H1 (cell line): ENCODE measurements at regions of chrX and their contacts with region 1.

Region 1: GRCh38 chrX:68807818-68808217 is 21.0 kb upstream of the EFNB1 start:
- DNase-seq: no peak
- H3K4me3 ChIP-seq: no peak overlapping the region
- H3K27ac ChIP-seq: no peak overlapping the region
- H3K4me1 ChIP-seq: no peaks in the 10 kb centered on the region
- H3K27me3 ChIP-seq: no peaks in the 10 kb centered on the region
- CTCF ChIP-seq: peak in 2 of 3 experiments; percentile 37 to 52; a peak in 3 of 4 replicates
- EP300 ChIP-seq: no peak
- POLR2A ChIP-seq: no peak
- RAD21 ChIP-seq: peak; percentile 50 to 69

Region 2: DNA sequence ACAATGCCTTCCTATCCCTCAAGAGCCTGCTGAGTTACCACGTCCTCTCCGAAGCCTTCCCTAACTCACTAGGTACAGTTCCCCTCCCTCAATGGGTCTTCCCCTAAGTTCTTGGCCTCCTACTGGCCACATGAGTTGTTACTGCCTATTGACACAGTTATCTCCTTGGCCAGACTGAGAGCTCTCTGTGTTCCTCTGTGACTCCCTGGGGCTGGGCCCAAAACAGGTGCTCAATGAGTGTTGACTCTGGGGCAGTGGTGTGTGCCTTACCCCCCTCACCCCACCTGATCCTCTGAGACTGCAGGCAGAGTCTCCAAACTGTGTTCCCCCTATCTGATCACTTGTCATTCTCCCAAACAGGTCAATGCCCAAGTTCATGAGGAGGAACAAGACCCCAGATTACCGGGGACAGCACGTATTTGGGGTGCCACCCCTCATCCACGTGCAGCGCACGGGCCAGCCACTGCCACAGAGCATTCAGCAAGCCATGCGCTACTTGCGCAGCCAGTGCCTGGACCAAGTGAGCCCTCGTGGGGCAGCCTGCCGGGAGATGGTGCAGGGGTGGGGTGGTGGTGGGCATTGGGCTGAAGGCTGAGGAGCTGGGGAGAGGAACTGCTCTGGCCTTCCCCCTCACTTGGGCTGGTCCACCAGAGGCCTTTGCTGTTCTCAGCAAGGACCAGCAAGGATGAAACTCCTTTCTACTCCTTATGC is 87.8 kb before region 1 on chrX:
- CTCF ChIA-PET with region 1: interaction called, 14 read pairs
- POLR2A ChIA-PET with region 1: no interaction called
- DNase-seq: no peak
- H3K4me3 ChIP-seq: no peak overlapping the region
- H3K27ac ChIP-seq: no peak overlapping the region
- H3K4me1 ChIP-seq: no peaks in the 10 kb centered on the region
- H3K27me3 ChIP-seq: no peaks in the 10 kb centered on the region
- CTCF ChIP-seq: peak in 2 of 3 experiments; percentile 17 to 42; a peak in 2 of 4 replicates
- EP300 ChIP-seq: no peak
- POLR2A ChIP-seq: no peak
- RAD21 ChIP-seq: peak in 1 of 2 experiments; percentile 21; a peak in 1 of 4 replicates

Region 3: DNA sequence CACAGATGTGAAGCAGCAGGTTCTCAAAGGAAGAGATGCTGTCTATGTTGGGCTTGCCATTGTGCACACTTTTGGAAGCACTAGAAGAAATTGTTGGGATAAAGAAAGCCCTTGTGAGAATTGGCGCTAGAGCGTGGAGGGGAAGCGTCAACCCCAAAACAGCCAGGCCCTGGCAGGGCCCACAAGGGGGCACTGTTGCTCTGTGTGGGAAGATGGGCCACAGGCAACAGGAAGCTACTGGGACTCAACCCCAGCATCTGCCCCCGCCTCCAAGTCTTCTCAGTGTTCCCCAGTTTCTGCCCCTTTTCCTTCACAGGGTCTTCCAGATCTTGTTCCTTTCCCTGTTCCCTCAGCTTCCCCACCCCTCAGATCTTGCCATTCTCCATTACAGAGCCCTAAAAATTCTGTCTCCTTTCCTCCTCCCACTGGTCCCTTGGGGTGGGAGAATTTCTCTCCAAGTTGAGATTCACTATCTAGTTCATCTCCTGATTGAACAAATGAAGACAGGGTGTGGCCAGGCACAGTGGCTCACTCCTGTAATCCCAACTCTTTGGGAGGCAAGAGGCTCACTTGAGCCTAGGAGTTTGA is 74.8 kb before region 1 on chrX:
- CTCF ChIA-PET with region 1: interaction called, 94 read pairs
- POLR2A ChIA-PET with region 1: interaction called, 4 read pairs
- DNase-seq: peak; percentile 10 to 84
- H3K4me3 ChIP-seq: no peak overlapping the region
- H3K27ac ChIP-seq: no peak overlapping the region
- H3K4me1 ChIP-seq: no peaks in the 10 kb centered on the region
- H3K27me3 ChIP-seq: no peaks in the 10 kb centered on the region
- CTCF ChIP-seq: peak; percentile 76 to 81 (median 79)
- EP300 ChIP-seq: no peak
- POLR2A ChIP-seq: no peak
- RAD21 ChIP-seq: peak; percentile 87 to 88

Region 4: GRCh38 chrX:68784816-68785215 is 23.0 kb before region 1 on chrX:
- CTCF ChIA-PET with region 1: interaction called, 12 read pairs
- POLR2A ChIA-PET with region 1: no interaction called
- DNase-seq: no peak
- H3K4me3 ChIP-seq: no peak overlapping the region
- H3K27ac ChIP-seq: no peak overlapping the region
- H3K4me1 ChIP-seq: no peaks in the 10 kb centered on the region
- H3K27me3 ChIP-seq: no peaks in the 10 kb centered on the region
- CTCF ChIP-seq: no peak
- EP300 ChIP-seq: no peak
- POLR2A ChIP-seq: no peak
- RAD21 ChIP-seq: no peak

Region 5: DNA sequence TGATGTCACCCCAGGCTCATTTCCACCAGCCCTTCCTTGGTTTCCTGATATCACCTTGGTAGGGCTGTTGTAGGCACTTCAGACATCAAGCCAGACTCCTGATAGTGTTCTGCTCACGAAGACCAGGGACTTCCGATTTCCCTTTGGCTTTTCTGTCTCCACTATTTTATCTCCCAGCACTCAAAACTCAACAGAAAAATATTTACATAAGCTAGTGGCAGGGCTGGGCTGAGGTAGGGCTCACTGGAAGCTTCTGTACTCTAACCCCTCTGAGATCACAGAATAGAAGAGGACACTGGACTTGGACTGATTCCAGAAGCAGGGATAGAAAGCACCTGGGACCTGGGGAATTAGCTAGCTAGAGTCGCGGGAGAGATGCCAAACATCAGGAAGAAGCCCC is 13.4 kb before region 1 on chrX:
- CTCF ChIA-PET with region 1: interaction called, 21 read pairs
- POLR2A ChIA-PET with region 1: no interaction called
- DNase-seq: no peak
- H3K4me3 ChIP-seq: no peak overlapping the region
- H3K27ac ChIP-seq: no peak overlapping the region
- H3K4me1 ChIP-seq: no peaks in the 10 kb centered on the region
- H3K27me3 ChIP-seq: no peaks in the 10 kb centered on the region
- CTCF ChIP-seq: no peak
- EP300 ChIP-seq: no peak
- POLR2A ChIP-seq: no peak
- RAD21 ChIP-seq: no peak

Region 6: GRCh38 chrX:68822641-68823410 is 15.0 kb after region 1 on chrX:
- CTCF ChIA-PET with region 1: interaction called, 20 read pairs
- POLR2A ChIA-PET with region 1: no interaction called
- DNase-seq: no peak
- H3K4me3 ChIP-seq: no peak overlapping the region
- H3K27ac ChIP-seq: no peak overlapping the region
- H3K4me1 ChIP-seq: peaks cover 0 to 3% (median 0%) of the 10 kb centered on the region in 4 experiments; a peak in 3 of 7 replicates
- H3K27me3 ChIP-seq: peaks cover 0 to 27% (median 20%) of the 10 kb centered on the region in 4 experiments; a peak in 6 of 7 replicates
- CTCF ChIP-seq: peak in 2 of 3 experiments; percentile 53 to 76; a peak in 3 of 4 replicates
- EP300 ChIP-seq: no peak
- POLR2A ChIP-seq: no peak
- RAD21 ChIP-seq: peak; percentile 81 to 87